Activated T-helper 1 cell treated with anti-CD3 and anti-CD28 coated beads, Interleukin-12 subunit alpha, Interleukin-12 subunit beta, Interleukin-2, Interleukin-4 antibody, amounts not matched to agents 30 ng/mL and 10 ng/mL and 1 ng/mL, durations not matched to agents 14 hours and 24 hours and 36 hours (primary cell): ENCODE measurements at regions of chrX and their contacts with region 1.

Region 1: GRCh38 chrX:19682712-19683331 is 167.5 kb upstream of the MAP3K15 start:
- DNase-seq: peak; percentile 76
- H3K4me3 Mint-ChIP-seq: peak overlapping the region; percentile 59
- H3K27ac Mint-ChIP-seq: peak overlapping the region; percentile 98
- H3K4me1 Mint-ChIP-seq: peaks cover 88% of the 10 kb centered on the region
- H3K27me3 Mint-ChIP-seq: no peaks in the 10 kb centered on the region

Region 2: GRCh38 chrX:19554786-19555185 is 128.0 kb before region 1 on chrX:
- intact Hi-C with region 1: loop called (anchors 1 kb)
- DNase-seq: no peak
- H3K4me3 Mint-ChIP-seq: peak overlapping the region; percentile 12
- H3K27ac Mint-ChIP-seq: peak overlapping the region; percentile 58
- H3K4me1 Mint-ChIP-seq: peaks cover 47% of the 10 kb centered on the region
- H3K27me3 Mint-ChIP-seq: no peaks in the 10 kb centered on the region

Region 3: DNA sequence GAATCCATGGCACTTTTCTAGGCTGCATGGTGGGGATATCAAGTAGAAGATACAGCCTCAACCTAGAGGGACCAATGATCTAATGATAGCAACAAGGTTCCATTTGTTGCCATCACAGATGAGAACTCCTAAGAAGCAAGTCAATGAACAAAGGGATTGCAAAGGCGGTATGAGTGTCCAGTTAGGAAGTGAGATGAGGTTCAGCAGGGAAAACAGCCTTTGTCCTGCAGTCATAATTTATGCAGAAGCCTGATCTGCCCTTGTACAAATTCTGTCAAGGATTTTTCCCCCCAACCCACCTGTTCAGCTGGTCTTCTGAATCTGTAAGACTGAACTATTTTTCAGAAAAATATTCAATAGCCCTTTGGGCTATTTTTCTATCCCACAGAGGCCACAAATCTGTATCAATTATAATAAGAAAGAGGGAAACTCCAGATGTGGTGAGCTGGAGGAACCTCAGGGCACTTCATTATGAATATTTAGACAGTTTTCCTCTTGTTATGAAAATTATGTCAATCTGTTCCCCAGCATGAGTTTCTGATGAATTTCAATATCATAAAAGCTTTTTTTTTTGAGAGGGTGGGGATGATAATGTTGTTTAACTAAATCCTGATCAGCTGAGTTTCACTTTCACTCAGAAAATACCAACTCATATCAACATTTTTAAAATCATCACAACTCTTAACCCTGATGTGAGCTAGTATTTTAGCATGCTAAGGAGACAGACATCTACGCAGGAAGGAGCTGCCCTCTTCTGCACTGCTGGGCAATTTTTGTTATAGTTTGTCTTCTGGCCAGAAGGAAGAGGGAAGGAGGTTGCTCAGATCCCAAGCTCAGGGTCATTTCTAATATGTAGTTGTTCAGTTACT is 40.3 kb before region 1 on chrX:
- intact Hi-C with region 1: loop called (anchors 1 kb)
- DNase-seq: no peak
- H3K4me3 Mint-ChIP-seq: peak overlapping the region; percentile 37
- H3K27ac Mint-ChIP-seq: peak overlapping the region; percentile 68
- H3K4me1 Mint-ChIP-seq: peaks cover 31% of the 10 kb centered on the region
- H3K27me3 Mint-ChIP-seq: no peaks in the 10 kb centered on the region

Region 4: DNA sequence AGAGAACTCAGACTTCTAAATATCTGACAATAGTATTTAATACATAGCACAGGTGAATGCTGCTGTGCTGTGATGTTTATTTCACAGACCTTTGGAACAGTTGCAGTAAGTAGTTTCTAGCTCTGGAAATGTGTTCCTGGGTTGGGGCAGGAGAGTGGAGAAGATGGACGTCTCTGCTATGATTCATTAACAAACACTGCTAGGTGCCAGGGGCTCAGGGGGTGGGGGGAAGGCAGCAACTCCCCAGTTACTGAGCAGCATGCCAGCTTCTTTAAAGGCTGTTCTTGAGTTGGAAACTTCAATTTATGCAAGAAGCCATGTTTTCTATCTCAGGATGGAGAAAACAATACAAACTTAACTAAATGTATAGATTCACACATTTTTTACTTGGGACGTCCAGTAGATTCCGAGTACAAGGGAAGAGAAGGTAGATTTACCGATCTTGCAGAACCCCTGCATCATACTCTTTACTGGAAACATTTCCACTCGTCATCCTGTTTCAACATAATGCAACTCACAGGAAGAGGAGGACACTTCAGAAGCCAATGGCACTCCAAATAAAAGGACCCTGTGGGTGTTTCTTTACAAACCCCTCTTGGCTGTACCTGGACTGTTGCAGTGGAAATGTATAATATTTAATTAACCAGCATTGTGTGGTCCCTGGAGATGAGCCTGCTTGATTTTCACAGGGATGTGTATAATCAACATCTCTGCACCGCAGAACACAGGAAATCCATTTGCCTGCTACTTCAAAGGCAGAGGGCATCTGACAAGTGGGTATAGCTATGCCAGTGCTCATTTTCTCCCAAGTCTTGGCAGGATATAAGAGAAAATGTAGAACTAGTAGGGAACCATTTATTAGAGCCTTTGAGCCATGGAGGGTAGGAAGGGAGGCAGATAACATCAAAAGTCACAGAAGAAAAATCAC is 33.2 kb after region 1 on chrX:
- intact Hi-C with region 1: loop called (anchors 2 kb)
- DNase-seq: no peak
- H3K4me3 Mint-ChIP-seq: peak overlapping the region; percentile 33
- H3K27ac Mint-ChIP-seq: peak overlapping the region; percentile 81
- H3K4me1 Mint-ChIP-seq: peaks cover 23% of the 10 kb centered on the region
- H3K27me3 Mint-ChIP-seq: no peaks in the 10 kb centered on the region

Region 5: DNA sequence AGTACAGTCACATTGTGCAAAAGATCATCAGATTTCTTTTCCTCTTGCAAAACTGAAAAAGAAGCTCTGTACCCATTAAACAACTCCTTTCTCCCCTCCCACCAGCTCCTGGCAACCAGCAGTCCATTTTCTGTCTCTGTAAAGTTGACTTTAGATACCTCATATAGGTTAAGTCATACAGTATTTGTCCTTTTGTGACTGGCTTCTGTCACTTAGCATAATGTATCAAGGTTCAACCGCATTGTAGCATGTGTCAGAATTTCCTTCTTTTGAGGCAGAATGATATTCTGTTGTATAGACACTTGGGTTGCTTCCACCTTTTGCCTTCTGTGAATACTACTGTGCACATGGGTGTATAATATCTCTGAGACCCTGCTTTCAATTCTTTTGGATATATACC is 82.8 kb after region 1 on chrX:
- intact Hi-C with region 1: loop called (anchors 5 kb)
- DNase-seq: no peak
- H3K4me3 Mint-ChIP-seq: no peak overlapping the region
- H3K27ac Mint-ChIP-seq: peak overlapping the region; percentile 43
- H3K4me1 Mint-ChIP-seq: peaks cover 47% of the 10 kb centered on the region
- H3K27me3 Mint-ChIP-seq: no peaks in the 10 kb centered on the region

Region 6: DNA sequence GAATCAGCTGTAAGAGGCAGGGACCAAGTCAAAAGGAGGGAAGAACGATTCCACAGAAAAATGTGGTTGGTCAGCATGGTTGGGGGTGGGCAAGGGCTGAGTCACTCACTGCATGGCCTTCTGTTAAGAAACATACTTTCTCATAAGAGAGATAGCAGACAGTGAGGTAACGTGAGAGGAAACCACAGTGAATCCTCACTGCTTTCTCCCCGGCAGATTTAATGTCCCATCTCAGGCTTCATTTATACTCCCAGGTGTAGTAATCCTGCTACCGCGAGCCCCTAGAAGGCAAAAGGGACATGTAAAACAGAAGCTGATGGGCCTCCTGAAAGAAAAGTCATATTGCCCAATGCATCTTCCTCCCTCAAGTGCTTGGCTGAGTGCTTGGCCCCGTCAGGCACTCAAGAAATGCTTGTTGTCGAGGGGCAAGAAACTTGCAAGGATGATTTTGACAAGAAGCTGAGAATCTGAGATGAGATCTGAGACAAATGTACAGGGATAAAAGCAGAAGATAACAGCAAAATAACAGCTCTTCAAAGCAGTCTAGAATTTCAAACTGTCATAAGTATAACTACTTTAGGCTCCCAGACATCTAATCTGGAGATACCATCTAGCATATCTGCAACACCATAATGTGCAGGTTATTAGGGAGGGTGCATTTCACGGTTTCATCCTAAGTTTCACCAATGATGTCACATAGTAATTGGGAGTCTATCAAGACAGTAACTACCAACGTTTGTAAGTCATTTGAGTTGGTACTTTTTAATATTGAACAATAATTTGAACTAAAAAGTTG is 164.4 kb after region 1 on chrX:
- intact Hi-C with region 1: no loop called
- DNase-seq: no peak
- H3K4me3 Mint-ChIP-seq: peak overlapping the region; percentile 56
- H3K27ac Mint-ChIP-seq: peak overlapping the region; percentile 80
- H3K4me1 Mint-ChIP-seq: peaks cover 34% of the 10 kb centered on the region
- H3K27me3 Mint-ChIP-seq: no peaks in the 10 kb centered on the region

Region 7: DNA sequence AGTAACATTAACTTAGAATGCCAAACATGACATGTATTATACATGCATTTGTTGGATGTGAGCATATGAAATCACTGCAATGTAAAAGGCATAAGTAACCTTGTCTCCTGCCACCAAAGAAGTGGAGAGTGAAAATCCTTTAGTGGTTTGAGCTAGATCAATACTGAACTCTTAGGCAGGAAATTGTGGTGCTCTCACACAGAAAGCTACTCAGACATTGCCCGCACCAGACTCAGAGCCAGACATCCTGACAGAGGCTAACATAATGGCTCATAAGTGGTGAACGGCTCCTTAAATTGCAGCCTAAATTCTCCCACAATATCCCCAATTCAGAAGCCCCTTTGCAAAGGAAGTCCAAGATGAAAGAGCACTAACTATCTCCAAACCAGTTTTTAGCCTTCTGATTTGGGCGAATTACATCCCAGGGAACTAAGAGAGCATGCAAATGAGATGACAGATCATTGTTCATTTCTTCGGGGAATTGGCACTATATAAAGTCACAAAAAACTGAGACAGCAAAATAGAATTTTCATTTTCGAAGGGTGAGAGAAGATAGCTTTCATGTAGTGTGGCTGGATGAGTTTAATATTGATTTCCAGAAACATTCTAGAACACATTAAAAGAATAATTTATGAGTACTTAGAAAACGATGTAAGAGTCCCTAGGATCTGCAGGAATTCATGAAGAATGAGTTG is 817.5 kb after region 1 on chrX:
- intact Hi-C with region 1: no loop called
- DNase-seq: no peak
- H3K4me3 Mint-ChIP-seq: no peak overlapping the region
- H3K27ac Mint-ChIP-seq: peak overlapping the region; percentile 51
- H3K4me1 Mint-ChIP-seq: peaks cover 31% of the 10 kb centered on the region
- H3K27me3 Mint-ChIP-seq: peaks cover 14% of the 10 kb centered on the region